ENCODE measurements at regions of chr6 and their contacts with region 1.

Region 1: DNA sequence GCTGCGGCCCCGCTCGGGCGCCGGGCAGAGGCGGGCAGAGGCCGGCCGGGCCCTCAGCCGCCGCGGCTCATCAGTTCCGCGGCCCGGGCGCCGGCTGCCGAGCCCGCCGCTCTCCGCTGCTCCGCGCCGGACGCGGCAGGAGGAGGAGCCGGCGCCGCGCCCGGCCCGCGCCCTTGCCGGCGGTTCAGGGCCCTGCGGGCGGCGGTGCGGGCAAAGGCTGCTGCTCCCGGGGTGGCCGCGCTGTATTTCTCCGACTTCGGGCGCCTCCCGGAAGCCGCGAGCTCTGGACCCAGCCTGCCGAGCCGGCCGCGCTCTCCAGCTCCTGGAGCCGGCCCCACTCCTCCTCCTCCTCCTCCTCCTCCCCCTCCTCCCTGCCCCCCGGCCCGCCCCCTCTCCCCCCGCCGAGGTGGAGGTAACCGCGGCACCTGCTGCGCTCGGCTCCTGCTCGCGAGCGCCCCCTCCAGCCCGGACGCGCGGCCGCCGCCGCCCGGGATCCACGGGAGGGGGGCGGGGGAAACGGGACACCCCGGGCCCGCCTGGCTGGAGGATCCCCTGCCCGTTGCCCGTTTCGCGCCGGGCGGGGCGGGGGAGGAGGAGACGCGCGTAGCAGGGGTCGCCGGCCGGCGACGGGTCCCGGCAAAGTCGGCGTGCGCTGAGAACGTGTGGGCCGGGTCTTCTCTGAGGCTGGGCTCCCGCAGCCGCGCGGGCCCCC is at the start of gene SLC22A23:
- DNase-seq: peak; percentile 81 to 88
- H3K4me3 ChIP-seq: peak within 1 kb of the TSS; percentile 87
- H3K4me3 Mint-ChIP-seq: peak within 1 kb of the TSS; percentile 77
- H3K27ac Mint-ChIP-seq: peak within 1 kb of the TSS; percentile 21
- H3K4me1 ChIP-seq: peaks cover 10% of the 10 kb centered on the region; the same call in 1 of the 2 replicates
- H3K4me1 Mint-ChIP-seq: peaks cover 9% of the 10 kb centered on the region
- H3K27me3 ChIP-seq: no peaks in the 10 kb centered on the region
- H3K27me3 Mint-ChIP-seq: no peaks in the 10 kb centered on the region
- CTCF ChIP-seq: peak; percentile 43 to 83
- total RNA-seq, gene SLC22A23: 44.9 and 45.5 TPM in 2 replicates

Region 2: DNA sequence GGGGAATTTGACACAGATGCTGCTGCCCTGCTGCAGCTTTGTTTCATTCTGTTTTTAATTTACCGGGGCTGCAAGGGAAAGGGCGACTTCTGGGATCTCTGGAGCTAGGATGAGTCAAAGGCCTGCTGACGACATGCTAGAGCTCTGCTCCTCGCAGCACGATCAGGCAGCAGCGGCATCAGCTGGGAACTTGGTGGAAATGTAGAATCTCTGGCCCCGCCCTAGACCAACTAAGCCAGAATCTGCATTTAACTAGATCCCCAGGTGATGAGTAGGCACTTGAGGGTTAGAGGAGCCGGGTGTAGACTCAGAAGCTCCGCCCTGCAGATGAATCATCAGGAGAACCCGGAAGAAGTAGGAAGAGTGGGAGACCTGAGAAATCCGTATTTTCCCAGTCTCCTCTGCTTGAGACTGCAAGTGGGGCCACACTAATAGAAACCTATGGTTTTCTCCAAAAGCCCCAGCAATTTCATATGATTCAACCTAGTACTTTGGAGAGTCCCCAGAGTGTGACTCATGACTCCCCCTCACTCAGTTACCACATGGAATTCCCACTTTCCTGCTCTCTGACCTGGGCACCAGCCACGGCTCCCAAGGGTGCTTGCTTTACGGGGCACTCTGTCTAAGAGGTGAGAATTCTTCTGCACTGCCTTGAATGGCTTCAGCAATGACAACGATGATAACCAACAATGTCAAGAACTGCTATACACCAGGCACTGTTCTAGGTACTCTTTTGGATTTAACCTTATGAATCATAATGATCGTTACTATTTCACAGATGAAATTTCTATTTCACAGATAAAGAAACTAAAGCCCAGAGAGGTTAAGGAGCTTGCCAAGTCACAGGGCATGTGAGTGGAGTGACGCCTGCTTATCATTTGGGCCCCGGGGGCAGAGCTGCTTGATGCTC is 247.5 kb before region 1 on chr6:
- CTCF ChIA-PET with region 1: no interaction called
- POLR2A ChIA-PET with region 1: no interaction called
- intact Hi-C with region 1: no loop called
- DNase-seq: peak; percentile 64 to 77
- H3K4me3 ChIP-seq: no peak overlapping the region
- H3K4me3 Mint-ChIP-seq: peak overlapping the region; percentile 57
- H3K27ac Mint-ChIP-seq: peak overlapping the region; percentile 10
- H3K4me1 ChIP-seq: 0 out of 2 replicates have a peak, but pooled peaks cover 6% of the 10 kb centered on the region
- H3K4me1 Mint-ChIP-seq: peaks cover 14% of the 10 kb centered on the region
- H3K27me3 ChIP-seq: no peaks in the 10 kb centered on the region
- H3K27me3 Mint-ChIP-seq: no peaks in the 10 kb centered on the region
- CTCF ChIP-seq: no peak

Region 3: GRCh38 chr6:3277851-3278416 is 179.0 kb before region 1 on chr6:
- CTCF ChIA-PET with region 1: interaction called, 5 read pairs
- POLR2A ChIA-PET with region 1: no interaction called
- intact Hi-C with region 1: loop called (anchors 1 kb)
- DNase-seq: no peak
- H3K4me3 ChIP-seq: no peak overlapping the region
- H3K4me3 Mint-ChIP-seq: no peak overlapping the region
- H3K27ac Mint-ChIP-seq: no peak overlapping the region
- H3K4me1 ChIP-seq: no peaks in the 10 kb centered on the region
- H3K4me1 Mint-ChIP-seq: no peaks in the 10 kb centered on the region
- H3K27me3 ChIP-seq: no peaks in the 10 kb centered on the region
- H3K27me3 Mint-ChIP-seq: no peaks in the 10 kb centered on the region
- CTCF ChIP-seq: no peak

Region 4: DNA sequence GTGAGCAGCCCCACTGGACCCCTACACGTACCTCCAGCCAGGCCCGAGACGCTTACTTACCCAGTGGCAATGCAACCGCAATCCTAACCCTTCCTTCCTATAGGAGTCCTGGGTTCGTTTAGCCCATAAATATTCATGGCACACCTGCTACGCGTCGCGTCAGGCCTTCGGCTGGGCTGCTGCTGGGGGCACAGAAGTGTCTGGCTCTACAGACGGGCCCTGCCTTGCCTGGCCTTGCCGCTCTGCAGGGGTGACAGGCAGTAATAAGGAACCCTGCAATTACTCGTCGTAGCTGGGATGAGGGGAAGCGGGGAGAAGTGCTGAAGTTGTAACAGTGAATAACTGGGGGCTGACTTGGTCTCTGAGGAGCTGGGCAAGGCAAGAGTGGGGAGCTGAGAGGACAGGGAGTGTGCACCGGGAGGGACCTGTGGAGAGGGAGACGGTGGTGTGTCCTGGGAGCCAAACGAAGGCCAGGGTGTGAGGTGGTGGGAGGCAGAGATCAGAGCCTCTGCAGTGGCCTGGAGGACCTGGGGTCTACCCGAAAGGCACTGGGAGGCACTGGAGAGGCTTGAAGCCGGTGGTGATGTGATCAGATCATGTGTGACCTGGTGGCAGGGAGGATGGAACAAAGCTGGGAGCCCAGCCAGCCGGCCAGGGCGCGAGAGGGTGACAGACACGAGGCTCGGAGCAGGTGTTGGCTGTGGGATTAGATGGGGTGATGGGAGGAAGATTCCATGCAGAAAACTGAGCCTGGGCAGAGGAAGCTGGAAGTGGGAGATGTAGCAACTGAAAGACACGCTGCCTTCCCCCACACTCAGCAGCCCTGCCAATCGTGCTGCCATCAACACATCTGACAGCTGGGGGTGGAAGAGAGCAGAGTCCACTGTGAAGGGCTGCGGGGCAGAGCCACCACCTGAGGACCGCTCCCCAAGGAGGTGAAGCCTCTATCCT is 161.7 kb before region 1 on chr6:
- CTCF ChIA-PET with region 1: no interaction called
- POLR2A ChIA-PET with region 1: no interaction called
- intact Hi-C with region 1: loop called (anchors 5 kb)
- DNase-seq: peak; percentile 29 to 33
- H3K4me3 ChIP-seq: no peak overlapping the region
- H3K4me3 Mint-ChIP-seq: peak overlapping the region; percentile 34
- H3K27ac Mint-ChIP-seq: no peak overlapping the region
- H3K4me1 ChIP-seq: no peaks in the 10 kb centered on the region
- H3K4me1 Mint-ChIP-seq: no peaks in the 10 kb centered on the region
- H3K27me3 ChIP-seq: no peaks in the 10 kb centered on the region
- H3K27me3 Mint-ChIP-seq: no peaks in the 10 kb centered on the region
- CTCF ChIP-seq: no peak

Region 5: DNA sequence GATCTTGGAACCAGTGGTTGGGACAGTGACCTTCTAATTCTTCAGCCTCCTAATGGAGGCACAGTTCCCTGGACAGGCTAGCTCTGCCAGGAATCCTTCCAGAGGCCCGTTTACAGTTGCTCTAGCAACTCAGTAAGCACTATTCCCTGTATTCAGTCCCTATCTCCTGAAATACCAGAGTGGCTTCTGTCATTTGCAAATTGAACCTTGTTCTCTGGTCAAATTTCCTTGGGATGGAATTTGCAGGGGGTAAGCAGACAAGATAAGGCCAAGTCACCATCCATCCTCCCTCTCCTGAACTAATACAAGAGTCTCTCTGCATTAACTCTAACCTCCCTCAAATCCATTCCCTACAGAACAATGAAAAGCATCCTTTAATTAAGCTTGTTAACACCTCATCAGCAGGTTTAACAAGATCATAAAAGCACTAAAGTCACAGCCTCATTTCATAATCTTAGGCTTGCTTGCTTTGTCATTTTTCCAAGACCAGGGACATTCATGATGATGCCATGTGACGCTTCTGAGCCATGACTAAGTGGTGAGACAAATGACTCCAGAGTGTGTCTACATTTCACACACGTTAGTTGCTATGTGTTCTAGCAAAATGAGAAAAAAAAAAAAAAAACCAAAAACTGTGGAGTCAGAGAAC is 37.2 kb before region 1 on chr6:
- CTCF ChIA-PET with region 1: interaction called, 4 read pairs
- POLR2A ChIA-PET with region 1: no interaction called
- intact Hi-C with region 1: loop called (anchors 1 kb)
- DNase-seq: peak; percentile 69
- H3K4me3 ChIP-seq: no peak overlapping the region
- H3K4me3 Mint-ChIP-seq: peak overlapping the region; percentile 63
- H3K27ac Mint-ChIP-seq: peak overlapping the region; percentile 98
- H3K4me1 ChIP-seq: peaks cover 84% of the 10 kb centered on the region
- H3K4me1 Mint-ChIP-seq: peaks cover 61% of the 10 kb centered on the region
- H3K27me3 ChIP-seq: no peaks in the 10 kb centered on the region
- H3K27me3 Mint-ChIP-seq: no peaks in the 10 kb centered on the region
- CTCF ChIP-seq: no peak

Region 6: DNA sequence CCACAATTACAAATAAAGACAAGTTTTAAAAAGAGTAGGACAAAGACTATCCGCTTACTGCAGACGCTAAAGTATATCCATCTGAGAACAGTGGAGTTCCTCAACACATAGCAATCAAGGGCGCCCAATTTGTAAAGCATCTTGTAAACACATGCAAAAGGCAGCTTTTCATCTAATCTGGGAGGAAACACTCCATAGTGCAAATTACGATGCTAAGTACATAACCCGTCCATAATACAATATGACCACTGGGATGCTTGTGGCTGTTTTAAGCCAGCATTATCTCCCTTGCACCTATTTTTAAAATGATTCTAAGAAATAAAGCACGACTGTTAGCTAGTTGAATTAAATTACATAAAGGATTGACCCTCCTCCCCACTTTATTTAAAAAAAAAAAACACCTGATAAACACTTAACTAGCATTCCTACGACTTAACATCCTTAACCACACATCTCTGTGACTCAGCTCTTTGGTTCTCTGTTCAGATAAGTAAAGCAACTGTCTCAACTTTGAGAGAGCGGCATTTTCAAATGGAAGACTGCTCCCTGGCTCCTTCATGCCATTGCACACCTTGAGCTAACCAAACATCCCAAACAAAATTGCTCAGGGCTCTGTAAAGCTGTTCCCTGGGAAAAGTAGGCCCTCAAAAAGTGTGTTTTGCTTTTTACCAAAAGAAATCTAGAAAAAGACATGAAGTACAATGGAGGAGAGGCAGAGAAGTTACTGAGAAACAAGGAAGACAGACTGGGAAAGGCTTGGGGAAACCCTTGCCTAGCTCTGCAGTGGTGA is 14.3 kb before region 1 on chr6:
- CTCF ChIA-PET with region 1: interaction called, 12 read pairs
- POLR2A ChIA-PET with region 1: interaction called, 8 read pairs
- intact Hi-C with region 1: no loop called
- DNase-seq: peak in 1 of 2 experiments; percentile 39
- H3K4me3 ChIP-seq: no peak overlapping the region
- H3K4me3 Mint-ChIP-seq: peak overlapping the region; percentile 41
- H3K27ac Mint-ChIP-seq: peak overlapping the region; percentile 72
- H3K4me1 ChIP-seq: peaks cover 75% of the 10 kb centered on the region
- H3K4me1 Mint-ChIP-seq: peaks cover 48% of the 10 kb centered on the region
- H3K27me3 ChIP-seq: no peaks in the 10 kb centered on the region
- H3K27me3 Mint-ChIP-seq: no peaks in the 10 kb centered on the region
- CTCF ChIP-seq: no peak

Region 7: DNA sequence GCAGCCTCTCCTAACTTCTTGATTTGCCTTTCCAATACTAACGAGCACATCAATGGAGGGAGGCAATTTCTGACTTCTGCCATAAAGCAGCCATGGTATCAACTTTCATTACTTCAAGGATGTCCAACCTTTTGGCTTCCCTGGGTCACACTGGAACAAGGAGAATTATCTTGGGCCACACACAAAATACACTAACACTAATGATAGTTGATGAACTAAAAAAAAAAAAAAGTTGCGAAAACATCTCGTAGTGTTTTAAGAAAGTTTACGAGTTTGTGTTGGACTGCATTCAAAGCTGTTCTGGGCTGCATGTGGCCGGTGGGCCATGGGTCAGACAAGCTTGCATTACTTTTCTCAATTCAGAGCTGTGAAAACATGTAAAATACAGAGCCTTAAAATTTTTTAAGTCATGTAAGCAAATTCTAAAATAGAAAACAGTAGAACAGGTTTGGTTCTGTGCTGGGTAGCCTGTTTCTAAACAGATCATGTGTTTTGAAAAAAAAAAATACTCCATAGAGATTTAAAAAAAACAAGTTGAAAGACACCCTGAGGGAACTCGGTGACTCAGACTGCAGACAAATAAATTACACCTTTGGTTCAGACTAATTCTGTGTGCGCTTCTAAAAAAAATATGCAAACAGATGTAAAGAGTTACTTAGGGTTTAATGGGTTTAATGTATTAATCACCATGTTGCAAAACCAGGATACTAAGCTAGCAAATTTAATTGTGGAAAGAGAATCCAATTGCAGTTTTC is 43.5 kb after region 1 on chr6:
- CTCF ChIA-PET with region 1: interaction called, 3 read pairs
- POLR2A ChIA-PET with region 1: no interaction called
- intact Hi-C with region 1: loop called (anchors 5 kb)
- DNase-seq: no peak
- H3K4me3 ChIP-seq: no peak overlapping the region
- H3K4me3 Mint-ChIP-seq: no peak overlapping the region
- H3K27ac Mint-ChIP-seq: no peak overlapping the region
- H3K4me1 ChIP-seq: peaks cover 35% of the 10 kb centered on the region
- H3K4me1 Mint-ChIP-seq: peaks cover 22% of the 10 kb centered on the region
- H3K27me3 ChIP-seq: no peaks in the 10 kb centered on the region
- H3K27me3 Mint-ChIP-seq: no peaks in the 10 kb centered on the region
- CTCF ChIP-seq: no peak

Region 8: GRCh38 chr6:3732345-3733141 is 275.6 kb after region 1 on chr6:
- CTCF ChIA-PET with region 1: no interaction called
- POLR2A ChIA-PET with region 1: no interaction called
- intact Hi-C with region 1: loop called (anchors 5 kb)
- DNase-seq: peak; percentile 75 to 82
- H3K4me3 ChIP-seq: no peak overlapping the region
- H3K4me3 Mint-ChIP-seq: no peak overlapping the region
- H3K27ac Mint-ChIP-seq: no peak overlapping the region
- H3K4me1 ChIP-seq: no peaks in the 10 kb centered on the region
- H3K4me1 Mint-ChIP-seq: no peaks in the 10 kb centered on the region
- H3K27me3 ChIP-seq: no peaks in the 10 kb centered on the region
- H3K27me3 Mint-ChIP-seq: no peaks in the 10 kb centered on the region
- CTCF ChIP-seq: peak; percentile 89 to 93

Region 9: GRCh38 chr6:3742426-3743344 is 285.8 kb after region 1 on chr6:
- CTCF ChIA-PET with region 1: no interaction called
- POLR2A ChIA-PET with region 1: no interaction called
- intact Hi-C with region 1: no loop called
- DNase-seq: peak; percentile 73 to 88
- H3K4me3 ChIP-seq: no peak overlapping the region
- H3K4me3 Mint-ChIP-seq: no peak overlapping the region
- H3K27ac Mint-ChIP-seq: peak overlapping the region; percentile 16
- H3K4me1 ChIP-seq: peaks cover 14% of the 10 kb centered on the region
- H3K4me1 Mint-ChIP-seq: peaks cover 14% of the 10 kb centered on the region
- H3K27me3 ChIP-seq: no peaks in the 10 kb centered on the region
- H3K27me3 Mint-ChIP-seq: no peaks in the 10 kb centered on the region
- CTCF ChIP-seq: peak; percentile 90 to 91

Measured in Caco-2 (cell line).